Activated CD4-positive, alpha-beta T cell treated with anti-CD3 and anti-CD28 coated beads, Interleukin-2, amount 10 ng/mL, durations not matched to agents 7 days and 5 days (primary cell): ENCODE measurements at regions of chr5 and their contacts with region 1.

Region 1: DNA sequence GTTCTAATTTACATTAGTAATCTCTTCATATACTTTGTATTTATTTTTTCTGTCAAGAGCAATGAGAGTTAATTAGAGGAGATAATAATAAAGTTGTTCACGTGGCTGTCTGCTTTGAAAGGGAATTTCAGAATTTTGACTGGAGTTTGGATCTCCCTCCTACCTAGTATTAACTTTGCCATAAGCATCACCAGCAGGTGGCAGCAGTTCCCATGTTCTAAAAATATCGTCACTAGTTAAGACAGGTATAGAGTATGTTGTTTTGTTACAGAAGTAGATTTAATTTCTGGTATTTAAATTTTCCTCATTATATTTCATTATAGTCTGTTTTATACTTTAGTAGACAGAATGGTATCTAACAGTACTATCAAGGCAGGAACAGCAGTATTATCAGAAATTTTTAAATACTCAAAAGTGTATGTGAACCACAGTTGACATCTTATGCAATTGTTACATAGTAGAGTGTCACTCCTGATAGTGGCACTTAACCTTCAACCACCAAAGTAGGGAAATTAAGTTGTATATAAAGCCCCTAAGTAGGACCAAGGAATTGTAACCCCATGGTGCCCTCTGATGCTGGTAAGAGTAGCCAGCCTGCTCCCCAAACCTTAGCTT is 20.4 kb downstream of the GNPDA1 start:
- DNase-seq: peak; percentile 86
- H3K4me3 Mint-ChIP-seq: no peak overlapping the region
- H3K27ac Mint-ChIP-seq: no peak overlapping the region
- H3K4me1 Mint-ChIP-seq: peaks cover 4% of the 10 kb centered on the region
- H3K27me3 Mint-ChIP-seq: no peaks in the 10 kb centered on the region

Region 2: GRCh38 chr5:141923448-141924352 is 68.8 kb before region 1 on chr5 and contains the start of gene DELE1:
- CTCF ChIA-PET with region 1: no interaction called
- POLR2A ChIA-PET with region 1: no interaction called
- DNase-seq: peak; percentile 94
- H3K4me3 Mint-ChIP-seq: peak within 1 kb of the TSS; percentile 87
- H3K27ac Mint-ChIP-seq: peak within 1 kb of the TSS; percentile 88
- H3K4me1 Mint-ChIP-seq: peaks cover 35% of the 10 kb centered on the region
- H3K27me3 Mint-ChIP-seq: no peaks in the 10 kb centered on the region
- total RNA-seq, gene DELE1: 71.5 to 72.1 TPM

Region 3: GRCh38 chr5:141976176-141976575 is 16.3 kb before region 1 on chr5:
- CTCF ChIA-PET with region 1: interaction called, 12 read pairs
- POLR2A ChIA-PET with region 1: no interaction called
- DNase-seq: no peak
- H3K4me3 Mint-ChIP-seq: no peak overlapping the region
- H3K27ac Mint-ChIP-seq: no peak overlapping the region
- H3K4me1 Mint-ChIP-seq: peaks cover 21% of the 10 kb centered on the region
- H3K27me3 Mint-ChIP-seq: no peaks in the 10 kb centered on the region

Region 4: DNA sequence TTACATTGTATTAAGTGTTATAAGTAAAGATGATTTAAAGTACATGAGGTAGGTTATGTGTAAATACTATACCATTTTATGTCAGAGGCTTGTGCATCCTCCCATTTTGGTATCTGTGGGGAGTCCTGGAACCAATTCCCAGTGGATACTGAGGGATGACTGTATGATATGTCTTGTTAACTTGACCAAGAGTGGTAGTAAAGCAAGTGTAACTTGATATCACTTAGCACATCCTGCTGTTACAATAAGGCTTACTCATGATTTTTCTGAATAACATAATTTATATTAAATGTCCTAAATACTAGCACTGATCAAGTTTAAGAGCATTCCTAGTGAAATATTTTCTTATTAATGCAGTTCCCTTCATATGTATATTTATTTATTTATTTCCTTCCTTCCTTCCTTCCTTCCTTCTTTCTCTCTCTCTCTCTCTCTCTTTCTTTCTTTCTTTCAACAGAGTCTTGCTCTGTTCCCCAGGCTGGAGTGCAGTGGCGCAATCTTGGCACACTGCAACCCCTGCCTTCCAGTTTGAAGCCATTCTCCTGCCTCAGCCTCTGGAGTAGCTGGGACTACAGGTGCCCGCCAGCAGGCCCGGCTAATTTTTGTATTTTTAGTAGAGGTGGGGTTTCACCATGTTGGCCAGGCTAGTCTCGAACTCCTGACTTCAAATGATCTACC is 123.6 kb after region 1 on chr5:
- CTCF ChIA-PET with region 1: no interaction called
- POLR2A ChIA-PET with region 1: no interaction called
- DNase-seq: no peak
- H3K4me3 Mint-ChIP-seq: no peak overlapping the region
- H3K27ac Mint-ChIP-seq: no peak overlapping the region
- H3K4me1 Mint-ChIP-seq: peaks cover 65% of the 10 kb centered on the region
- H3K27me3 Mint-ChIP-seq: no peaks in the 10 kb centered on the region

Region 5: DNA sequence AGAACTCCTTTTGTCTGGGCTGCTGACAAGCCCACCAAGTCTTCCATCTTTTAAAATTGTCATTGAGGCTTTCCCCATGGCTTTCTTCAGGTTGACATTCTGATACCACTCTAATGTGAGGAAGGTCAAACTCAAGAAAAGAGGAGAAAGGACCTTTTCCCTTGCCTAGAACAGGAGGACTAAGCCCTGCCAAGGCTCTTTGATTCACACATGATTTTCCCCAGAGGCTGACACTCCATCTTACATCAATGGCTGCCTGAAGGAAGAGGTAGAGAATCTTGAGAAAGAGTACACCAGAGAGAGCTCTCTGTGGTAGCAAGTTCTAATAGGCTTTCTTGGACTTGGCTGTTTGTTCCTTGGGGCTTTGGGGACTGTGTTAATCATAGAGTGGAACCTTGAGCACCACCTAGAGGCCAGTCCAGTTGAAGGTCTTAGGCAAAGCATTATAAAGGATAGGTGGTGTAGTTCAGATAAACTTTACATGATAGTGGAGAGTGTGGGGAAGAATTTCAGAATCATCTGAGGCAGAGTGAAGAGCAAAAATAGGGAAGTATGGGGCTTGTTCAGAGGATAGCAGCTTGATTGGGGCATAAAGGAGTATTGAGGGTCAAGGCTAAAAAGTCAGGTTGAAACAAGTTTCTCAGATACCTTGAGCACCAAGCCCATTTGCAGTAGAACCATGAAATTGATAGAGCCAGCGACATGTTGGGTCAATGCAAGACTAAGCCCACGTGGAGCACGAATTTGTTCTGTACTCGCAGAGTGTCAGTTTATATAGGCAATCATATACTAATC is 152.8 kb after region 1 on chr5:
- CTCF ChIA-PET with region 1: interaction called, 15 read pairs
- POLR2A ChIA-PET with region 1: no interaction called
- DNase-seq: peak; percentile 83
- H3K4me3 Mint-ChIP-seq: no peak overlapping the region
- H3K27ac Mint-ChIP-seq: no peak overlapping the region
- H3K4me1 Mint-ChIP-seq: peaks cover 2% of the 10 kb centered on the region
- H3K27me3 Mint-ChIP-seq: no peaks in the 10 kb centered on the region